ENCODE measurements at regions of chr7 and their contacts with region 1.

Region 1: DNA sequence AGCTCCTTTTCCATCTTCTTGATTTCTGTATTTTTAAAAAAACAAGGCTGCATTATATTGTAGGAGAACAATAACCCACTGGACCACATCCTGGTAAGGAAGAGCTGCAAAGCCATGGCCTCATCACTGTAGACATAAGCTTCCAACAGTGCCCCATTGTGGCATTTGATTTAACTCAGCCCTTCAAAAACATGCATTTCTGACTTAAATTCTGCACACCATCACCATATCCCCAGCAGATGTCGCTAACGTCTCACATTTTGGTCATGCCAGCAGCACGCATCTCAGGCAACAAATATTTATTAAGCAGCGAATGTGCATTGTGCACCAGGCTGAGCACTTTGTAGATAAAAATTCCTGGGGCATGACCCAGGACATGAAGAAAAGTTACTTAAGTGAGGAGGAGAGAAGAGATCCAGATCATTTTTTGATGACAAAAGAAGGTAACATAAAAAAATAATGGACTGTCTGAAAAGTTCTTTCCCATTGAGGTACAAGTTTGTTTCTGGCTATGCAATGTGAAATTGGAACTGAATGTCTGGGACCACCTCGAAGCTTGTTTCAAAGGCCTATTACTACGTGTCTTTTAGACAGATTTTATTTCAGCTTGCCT is 164.6 kb upstream of the CDCA7L start:
- DNase-seq: peak; percentile 84
- H3K4me3 ChIP-seq: no peak overlapping the region
- H3K27ac ChIP-seq: peak overlapping the region; percentile 18
- H3K4me1 ChIP-seq: no peaks in the 10 kb centered on the region
- CTCF ChIP-seq: peak; percentile 93

Region 2: DNA sequence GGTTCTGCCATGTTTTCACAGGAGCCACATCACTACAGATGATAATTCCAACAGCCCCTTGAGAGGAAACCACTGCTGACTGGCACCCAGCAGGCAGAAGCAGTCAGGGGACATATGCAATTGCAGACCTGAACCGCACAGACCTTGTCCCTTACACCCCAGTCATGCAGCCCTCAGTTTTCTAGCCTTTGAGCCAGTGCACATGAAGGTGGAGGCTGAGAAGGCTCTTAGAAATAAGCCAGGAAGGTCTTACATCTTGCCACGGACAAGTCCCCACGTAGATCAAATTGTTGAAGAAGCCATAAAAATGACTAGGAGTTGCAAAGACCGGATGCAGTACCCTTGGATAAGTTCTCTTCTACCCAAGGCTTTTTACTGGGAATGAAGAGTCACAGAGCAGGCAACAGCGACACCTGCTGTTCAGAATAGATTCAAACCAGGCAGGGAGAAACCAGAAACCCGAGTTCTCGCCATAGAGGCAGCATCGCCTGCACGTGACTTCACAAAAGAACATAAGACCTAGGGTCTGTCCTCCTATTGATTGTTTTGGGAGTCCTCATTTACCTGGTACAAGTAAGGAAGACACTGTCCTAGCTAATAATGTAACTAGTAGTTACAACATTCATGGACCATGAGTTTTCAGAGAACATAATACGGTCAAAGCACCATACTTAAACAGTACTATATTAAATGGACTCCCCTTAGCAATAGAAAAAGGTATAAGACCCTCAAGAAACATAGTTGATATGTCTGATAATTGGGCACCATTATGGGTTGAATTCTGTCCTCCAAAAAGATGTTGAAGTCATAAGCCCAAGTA is 378.5 kb after region 1 on chr7:
- CTCF ChIA-PET with region 1: interaction called, 5 read pairs
- POLR2A ChIA-PET with region 1: interaction called, 3 read pairs
- intact Hi-C with region 1: loop called (anchors 1 kb)
- DNase-seq: peak; percentile 82
- H3K4me3 ChIP-seq: no peak overlapping the region
- H3K27ac ChIP-seq: no peak overlapping the region
- H3K4me1 ChIP-seq: peaks cover 37% of the 10 kb centered on the region
- CTCF ChIP-seq: peak; percentile 99

Region 3: DNA sequence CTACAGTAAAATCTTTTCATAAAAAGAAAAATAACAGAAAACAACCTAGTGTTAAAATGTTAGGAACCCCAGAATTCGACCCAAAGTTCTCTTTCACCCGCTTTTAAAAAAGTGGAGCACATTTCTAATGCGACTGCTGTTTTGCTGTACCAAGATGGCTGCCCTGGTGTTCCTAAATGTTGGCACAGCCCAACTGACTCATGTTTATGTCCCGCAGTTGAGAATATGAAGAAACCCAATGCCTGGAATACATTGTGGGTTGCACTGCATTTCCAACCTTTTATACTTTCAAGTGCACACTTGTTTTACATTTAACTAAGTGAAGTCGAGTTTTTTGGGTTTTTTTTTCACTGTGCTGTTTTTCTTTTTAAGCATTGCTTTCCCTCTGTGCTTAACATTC is 388.7 kb after region 1 on chr7:
- CTCF ChIA-PET with region 1: interaction called, 5 read pairs
- POLR2A ChIA-PET with region 1: interaction called, 4 read pairs
- intact Hi-C with region 1: loop called (anchors 1 kb)
- DNase-seq: no peak
- H3K4me3 ChIP-seq: no peak overlapping the region
- H3K27ac ChIP-seq: no peak overlapping the region
- H3K4me1 ChIP-seq: peaks cover 3% of the 10 kb centered on the region
- CTCF ChIP-seq: no peak